ENCODE measurements at regions of chr15 and their contacts with region 1.

Region 1: DNA sequence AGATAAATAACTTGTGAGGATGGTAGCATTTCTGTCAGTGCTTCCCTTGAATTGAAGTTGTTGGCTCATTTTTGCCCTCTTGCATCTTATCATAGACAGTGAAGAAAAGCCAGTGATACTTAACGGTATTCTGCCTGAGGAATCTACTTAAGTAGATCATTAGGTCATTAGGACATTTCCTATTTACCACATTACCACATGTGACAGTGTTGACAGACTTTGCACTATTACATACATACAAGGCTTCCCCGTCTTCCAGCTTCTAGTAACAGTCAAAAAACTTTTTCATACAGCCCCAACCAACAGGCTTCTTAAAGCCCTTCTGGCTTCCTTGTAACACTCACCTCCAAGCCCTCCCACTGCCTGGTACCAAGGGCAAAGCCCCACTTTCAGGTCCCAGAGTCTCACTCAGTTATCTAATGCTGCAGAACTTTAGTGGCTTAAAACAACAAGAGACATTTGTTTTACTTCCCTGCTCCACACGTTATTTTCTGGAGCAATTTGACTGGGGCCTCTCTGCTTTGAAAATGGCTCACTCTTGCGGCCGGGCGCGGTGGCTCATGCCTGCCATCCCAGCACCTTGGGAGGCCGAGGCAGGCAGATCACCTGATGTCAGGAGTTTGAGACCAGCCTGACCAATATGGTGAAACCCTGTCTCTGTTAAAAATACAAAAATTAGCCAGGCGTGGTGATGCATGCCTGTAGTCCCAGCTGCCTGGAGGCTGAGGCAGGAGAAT is 40.0 kb downstream of the ASB7 start:
- DNase-seq: no peak
- ATAC-seq: no peak
- H3K4me3 ChIP-seq: no peak overlapping the region
- H3K27ac ChIP-seq: no peak overlapping the region
- H3K4me1 ChIP-seq: peaks cover 7 to 11% of the 10 kb centered on the region in 2 donors
- H3K27me3 ChIP-seq: no peaks in the 10 kb centered on the region
- CTCF ChIP-seq: no peak
- POLR2A ChIP-seq: no peak

Region 2: DNA sequence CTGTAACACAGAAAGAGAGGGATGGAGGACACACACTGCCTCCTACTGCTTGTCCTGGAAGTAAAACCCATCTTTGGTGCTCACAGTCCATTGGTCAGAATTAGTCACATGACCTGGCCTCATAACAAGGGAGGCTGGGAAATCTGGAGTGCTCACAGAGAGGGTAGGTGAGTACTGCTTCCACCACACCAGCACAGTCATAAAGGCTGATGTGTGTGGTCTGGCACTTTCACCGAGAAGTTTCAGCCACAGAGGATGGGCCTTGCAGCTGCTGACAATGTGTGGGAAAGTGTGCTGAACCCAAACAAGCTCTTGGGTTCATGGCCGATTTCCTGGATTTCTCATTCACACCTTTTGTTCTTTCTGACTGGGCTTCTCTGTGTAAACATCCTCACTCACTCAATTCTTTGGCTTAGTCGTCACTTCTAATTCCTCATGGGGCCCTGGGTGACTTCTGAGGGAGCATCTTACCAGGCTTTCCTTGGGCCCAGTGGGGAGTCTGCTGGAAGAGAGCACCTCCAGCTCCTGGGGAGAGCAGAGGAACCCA is 60.7 kb after region 1 on chr15:
- in situ Hi-C with region 1: no loop called
- intact Hi-C with region 1: no loop called
- DNase-seq: no peak
- ATAC-seq: no peak
- H3K4me3 ChIP-seq: no peak overlapping the region
- H3K27ac ChIP-seq: no peak overlapping the region
- H3K4me1 ChIP-seq: no peaks in the 10 kb centered on the region
- H3K27me3 ChIP-seq: no peaks in the 10 kb centered on the region
- CTCF ChIP-seq: no peak
- POLR2A ChIP-seq: no peak

Region 3: DNA sequence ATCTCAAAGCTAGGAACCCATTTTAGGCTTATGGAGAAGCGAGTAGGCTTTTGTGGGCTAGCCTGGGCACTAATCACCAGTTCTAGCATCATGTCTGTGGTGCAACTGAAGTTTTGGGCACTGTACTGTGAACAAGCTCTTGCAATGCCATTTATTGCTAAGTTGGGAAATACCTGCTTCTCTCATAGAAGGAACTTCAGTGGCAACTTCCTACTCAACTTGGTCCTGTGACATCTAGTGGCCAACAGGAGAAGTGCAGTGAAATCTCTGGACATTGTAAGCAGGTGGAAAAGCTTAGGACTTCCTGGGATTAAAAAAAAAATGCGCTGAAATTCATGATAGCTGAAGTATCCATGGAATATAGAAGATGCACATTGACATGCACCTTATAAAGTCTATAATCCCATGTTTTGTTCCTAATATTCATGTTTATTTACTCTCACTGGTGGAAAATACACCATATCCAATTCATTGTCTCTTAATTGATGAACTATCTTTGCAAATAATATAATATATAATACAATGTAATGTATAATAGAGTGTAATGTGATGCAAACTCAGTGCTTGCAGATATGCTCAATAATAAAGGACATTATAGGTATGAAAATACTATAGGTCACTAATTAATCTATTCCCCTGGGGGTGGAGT is 230.8 kb after region 1 on chr15:
- in situ Hi-C with region 1: loop called in 1 of 4 experiments (anchors 10 kb)
- intact Hi-C with region 1: no loop called
- DNase-seq: peak in 1 of 2 donors; percentile 60
- ATAC-seq: peak; percentile 77 to 96
- H3K4me3 ChIP-seq: no peak overlapping the region
- H3K27ac ChIP-seq: no peak overlapping the region
- H3K4me1 ChIP-seq: no peaks in the 10 kb centered on the region
- H3K27me3 ChIP-seq: peaks cover 0 to 5% (median 0%) of the 10 kb centered on the region in 3 donors
- CTCF ChIP-seq: peak; percentile 83 to 95 (median 89)
- POLR2A ChIP-seq: no peak